Activated naive CD4-positive, alpha-beta T cell treated with anti-CD3 and anti-CD28 coated beads for 36 hours (primary cell): ENCODE measurements at regions of chr3 and their contacts with region 1.

Region 1: GRCh38 chr3:62622553-62623193 is 249.3 kb upstream of the FEZF2 start:
- DNase-seq: peak; percentile 4
- H3K4me3 Mint-ChIP-seq: no peak overlapping the region
- H3K27ac Mint-ChIP-seq: no peak overlapping the region
- H3K4me1 Mint-ChIP-seq: no peaks in the 10 kb centered on the region
- H3K27me3 Mint-ChIP-seq: peaks cover 26% of the 10 kb centered on the region

Region 2: DNA sequence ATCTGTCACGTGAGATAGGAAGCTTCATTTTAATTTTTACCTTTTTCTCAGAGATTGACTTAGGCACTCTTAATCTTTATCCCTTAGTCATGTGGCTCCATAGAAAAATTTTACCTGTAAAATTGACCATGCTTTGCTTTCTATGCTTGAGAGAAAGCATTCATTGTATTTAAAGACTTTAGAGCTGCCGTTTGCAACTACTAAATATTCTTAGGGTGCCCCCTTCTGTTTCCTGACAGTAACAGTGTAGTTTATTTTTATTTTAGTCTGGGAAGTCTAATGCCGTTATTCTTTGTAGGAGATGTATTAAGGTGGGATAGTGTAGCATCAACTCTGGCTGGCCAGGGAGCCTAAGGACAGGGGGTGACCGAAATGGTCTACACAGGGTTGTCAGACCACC is 571.0 kb after region 1 on chr3:
- CTCF ChIA-PET with region 1: no interaction called
- intact Hi-C with region 1: loop called (anchors 2 kb)
- DNase-seq: no peak
- H3K4me3 Mint-ChIP-seq: no peak overlapping the region
- H3K27ac Mint-ChIP-seq: no peak overlapping the region
- H3K4me1 Mint-ChIP-seq: no peaks in the 10 kb centered on the region
- H3K27me3 Mint-ChIP-seq: peaks cover 4% of the 10 kb centered on the region

Region 3: DNA sequence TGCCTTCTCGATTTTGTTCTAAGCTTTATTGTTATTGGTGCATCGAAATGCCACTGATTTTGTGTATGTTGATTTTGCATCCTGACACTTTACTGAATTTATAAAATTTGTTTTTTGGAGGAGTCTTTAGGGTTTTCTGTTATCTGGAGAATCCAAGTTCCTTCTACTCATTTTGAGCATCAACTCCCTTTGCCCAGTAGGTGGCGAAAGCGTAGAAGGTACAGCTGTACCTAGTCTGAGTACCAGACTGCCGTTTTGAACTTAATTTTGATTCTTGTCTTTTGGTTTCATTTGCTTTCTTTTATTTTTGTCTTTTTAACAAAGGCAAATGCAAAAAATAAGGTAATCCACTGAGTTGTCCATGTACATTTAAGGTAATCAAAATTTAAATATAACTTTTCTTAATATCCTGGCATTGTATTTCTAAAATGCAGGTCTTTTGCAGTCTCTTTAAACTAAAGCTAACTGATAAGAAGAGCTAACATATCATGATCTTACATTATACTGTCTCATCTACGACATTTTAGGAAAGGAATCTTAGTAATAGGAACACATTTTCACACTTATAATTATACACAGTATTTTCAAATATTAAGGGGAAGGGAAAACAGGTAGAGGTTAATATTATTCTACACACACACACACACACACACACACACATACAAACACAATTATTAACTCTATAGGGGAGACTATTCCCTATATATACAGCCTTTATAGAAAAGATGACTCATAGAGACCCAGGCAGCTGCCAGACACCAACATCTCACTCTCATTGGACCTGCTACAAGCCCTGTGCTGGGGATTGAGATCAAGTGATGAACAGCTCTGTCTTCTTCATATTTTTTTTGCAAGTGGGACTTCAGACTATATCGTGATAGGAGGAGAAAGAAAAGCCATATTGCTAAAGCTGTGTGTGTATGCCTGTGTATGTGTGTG is 727.2 kb after region 1 on chr3:
- CTCF ChIA-PET with region 1: no interaction called
- intact Hi-C with region 1: loop called (anchors 5 kb)
- DNase-seq: peak; percentile 64
- H3K4me3 Mint-ChIP-seq: no peak overlapping the region
- H3K27ac Mint-ChIP-seq: no peak overlapping the region
- H3K4me1 Mint-ChIP-seq: no peaks in the 10 kb centered on the region
- H3K27me3 Mint-ChIP-seq: peaks cover 32% of the 10 kb centered on the region

Region 4: GRCh38 chr3:63818281-63819150 is 1195.8 kb after region 1 on chr3:
- CTCF ChIA-PET with region 1: no interaction called
- intact Hi-C with region 1: loop called (anchors 2 kb)
- DNase-seq: peak; percentile 75
- H3K4me3 Mint-ChIP-seq: no peak overlapping the region
- H3K27ac Mint-ChIP-seq: no peak overlapping the region
- H3K4me1 Mint-ChIP-seq: peaks cover 2% of the 10 kb centered on the region
- H3K27me3 Mint-ChIP-seq: no peaks in the 10 kb centered on the region